ENCODE measurements at regions of chr6 and their contacts with region 1.

Region 1: DNA sequence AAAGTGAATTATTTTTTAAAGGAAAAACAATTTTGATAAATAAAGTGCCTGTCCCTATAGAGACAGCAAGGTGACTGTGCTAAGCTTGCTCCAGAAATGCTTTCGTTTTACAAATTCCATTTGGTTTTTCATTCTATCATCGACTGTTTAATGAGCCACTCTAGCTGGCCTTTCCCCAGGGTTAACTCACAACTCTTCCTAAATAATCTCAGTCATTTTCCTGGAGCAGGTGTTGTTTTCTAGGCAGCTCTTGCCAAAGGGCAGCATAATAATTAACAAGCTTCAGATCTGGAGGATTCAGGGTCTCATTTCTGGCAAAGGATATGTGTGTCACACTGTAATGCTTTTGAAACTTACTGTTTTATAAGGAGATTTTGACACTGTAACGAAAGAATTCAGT is 184.2 kb downstream of the KHDC1L start:
- DNase-seq: no peak
- ATAC-seq: peak in 1 of 4 donors; percentile 17
- H3K4me3 ChIP-seq: no peak overlapping the region
- H3K27ac ChIP-seq: no peak overlapping the region
- H3K4me1 ChIP-seq: no peaks in the 10 kb centered on the region
- H3K27me3 ChIP-seq: no peaks in the 10 kb centered on the region
- CTCF ChIP-seq: no peak

Region 2: DNA sequence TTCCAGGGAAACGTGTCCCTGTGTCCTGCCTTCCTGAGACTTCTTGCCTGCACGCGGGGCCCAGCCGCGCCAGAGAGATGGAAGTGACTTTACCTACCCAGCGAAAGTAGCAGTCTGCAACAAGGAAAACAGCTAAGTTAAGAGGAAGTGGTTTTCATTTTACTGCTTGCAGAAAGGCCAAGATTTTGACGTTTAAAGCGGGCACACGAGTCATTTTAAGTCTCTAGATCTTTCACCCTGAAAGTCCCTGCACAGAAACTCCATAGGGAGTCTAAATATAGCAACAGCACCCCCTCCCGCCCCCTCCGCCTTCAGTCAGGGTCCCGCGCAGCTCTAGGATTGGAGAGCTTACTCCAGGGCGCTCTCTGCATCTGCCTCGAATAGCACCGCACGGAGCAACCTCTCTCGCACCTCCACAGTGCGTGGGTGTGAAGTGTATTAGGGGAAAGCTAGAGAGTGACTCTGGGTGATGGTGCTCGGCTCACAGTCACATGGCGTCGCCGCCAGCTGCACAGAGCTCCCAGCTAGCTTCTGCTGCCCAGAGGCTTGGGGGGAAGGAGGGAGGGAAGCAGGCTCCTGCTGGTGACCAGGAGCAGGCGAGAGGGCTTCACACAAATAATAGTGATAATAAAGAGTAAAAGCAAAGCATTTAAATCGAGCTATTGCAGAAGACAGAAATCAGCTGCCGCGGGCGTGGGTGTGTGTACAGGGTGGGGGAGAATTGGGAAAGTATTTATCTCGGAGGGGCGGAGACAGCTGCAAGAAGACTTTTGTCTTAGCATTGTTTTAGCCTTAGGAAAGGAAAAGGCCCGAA is 421.0 kb before region 1 on chr6:
- intact Hi-C with region 1: loop called in 1 of 3 experiments (anchors 10 kb)
- DNase-seq: peak in 5 of 6 donors; percentile 25 to 59 (median 31)
- ATAC-seq: peak; percentile 30 to 70 (median 56)
- H3K4me3 ChIP-seq: peak overlapping the region in 2 of 4 donors; percentile 41 to 58
- H3K27ac ChIP-seq: no peak overlapping the region
- H3K4me1 ChIP-seq: peaks cover 0 to 8% (median 4%) of the 10 kb centered on the region in 3 donors
- H3K27me3 ChIP-seq: peaks cover 0 to under 1% (median 0%) of the 10 kb centered on the region in 4 donors
- CTCF ChIP-seq: no peak